ENCODE measurements at regions of chr10 and their contacts with region 1.

Region 1: GRCh38 chr10:4849555-4850242 is 23.7 kb downstream of the AKR1E2 start:
- DNase-seq: peak; percentile 93 to 96
- H3K4me3 ChIP-seq: no peak overlapping the region
- H3K4me3 Mint-ChIP-seq: peak overlapping the region; percentile 20
- H3K27ac Mint-ChIP-seq: peak overlapping the region; percentile 69
- H3K4me1 ChIP-seq: peaks cover 11% of the 10 kb centered on the region; the same call in 1 of the 2 replicates
- H3K4me1 Mint-ChIP-seq: peaks cover 20% of the 10 kb centered on the region
- H3K27me3 ChIP-seq: no peaks in the 10 kb centered on the region
- H3K27me3 Mint-ChIP-seq: no peaks in the 10 kb centered on the region
- CTCF ChIP-seq: peak; percentile 99 to 100

Region 2: DNA sequence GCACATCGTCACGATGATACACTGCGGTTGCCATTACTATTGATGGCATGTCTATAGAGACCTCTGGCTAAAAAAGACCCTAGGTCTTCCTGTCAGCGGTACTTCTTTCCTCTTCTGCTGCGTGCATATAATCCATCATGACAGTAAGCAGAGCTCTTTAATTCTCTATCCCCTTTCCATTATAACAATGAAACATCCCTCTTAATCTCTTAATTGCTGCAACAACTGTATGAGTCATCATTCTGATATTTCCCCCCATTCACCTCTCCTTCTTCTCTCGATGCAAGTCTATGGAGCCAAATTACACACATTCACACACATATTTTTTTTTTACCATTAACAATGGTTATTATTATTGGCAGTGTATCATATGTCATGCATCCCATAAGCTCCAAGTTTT is 68.9 kb before region 1 on chr10:
- CTCF ChIA-PET with region 1: no interaction called
- POLR2A ChIA-PET with region 1: no interaction called
- intact Hi-C with region 1: no loop called
- DNase-seq: no peak
- H3K4me3 ChIP-seq: no peak overlapping the region
- H3K4me3 Mint-ChIP-seq: no peak overlapping the region
- H3K27ac Mint-ChIP-seq: no peak overlapping the region
- H3K4me1 ChIP-seq: no peaks in the 10 kb centered on the region
- H3K4me1 Mint-ChIP-seq: no peaks in the 10 kb centered on the region
- H3K27me3 ChIP-seq: no peaks in the 10 kb centered on the region
- H3K27me3 Mint-ChIP-seq: peaks cover 14% of the 10 kb centered on the region
- CTCF ChIP-seq: no peak

Region 3: GRCh38 chr10:4819707-4820106 is 30.0 kb before region 1 on chr10:
- CTCF ChIA-PET with region 1: interaction called, 17 read pairs
- POLR2A ChIA-PET with region 1: no interaction called
- intact Hi-C with region 1: loop called (anchors 2 kb)
- DNase-seq: no peak
- H3K4me3 ChIP-seq: no peak overlapping the region
- H3K4me3 Mint-ChIP-seq: no peak overlapping the region
- H3K27ac Mint-ChIP-seq: no peak overlapping the region
- H3K4me1 ChIP-seq: peaks cover 9% of the 10 kb centered on the region; the same call in 1 of the 2 replicates
- H3K4me1 Mint-ChIP-seq: no peaks in the 10 kb centered on the region
- H3K27me3 ChIP-seq: no peaks in the 10 kb centered on the region
- H3K27me3 Mint-ChIP-seq: peaks cover 13% of the 10 kb centered on the region
- CTCF ChIP-seq: no peak

Region 4: DNA sequence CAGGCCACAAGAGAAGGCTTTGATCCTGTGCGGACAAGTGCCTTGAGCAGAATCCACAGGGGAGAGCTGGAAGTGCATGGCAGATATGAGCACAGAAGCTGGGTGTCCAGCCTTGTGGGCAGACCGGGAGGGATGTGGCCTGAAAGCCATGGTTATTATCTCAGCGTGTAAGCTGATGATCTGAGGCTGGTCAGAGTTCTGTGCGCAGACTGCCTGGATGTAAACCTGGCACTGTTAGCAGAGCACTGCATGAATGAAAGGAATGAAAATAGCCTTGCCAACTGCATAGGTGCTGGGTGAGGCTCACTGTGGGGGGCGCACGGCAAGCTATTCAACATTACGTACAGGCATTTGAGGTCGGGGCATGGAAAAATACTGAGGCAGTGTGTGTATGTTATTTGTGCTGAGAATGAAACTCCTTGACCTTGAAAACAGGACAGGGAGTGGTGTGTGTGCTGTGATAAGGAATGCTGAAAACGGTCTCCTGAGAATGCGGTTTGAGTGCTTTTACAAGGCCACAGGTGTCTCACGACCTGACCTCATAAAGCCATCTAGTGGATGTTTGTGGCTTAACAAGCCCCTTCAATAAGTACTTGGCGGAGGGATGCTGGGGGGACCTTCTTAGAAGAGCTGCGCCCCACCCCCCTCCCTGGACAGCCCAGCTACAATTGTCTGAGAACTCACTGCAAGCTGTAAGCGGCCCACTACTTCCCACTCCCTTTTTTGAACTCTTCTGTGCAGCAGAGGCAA is 132.2 kb after region 1 on chr10:
- CTCF ChIA-PET with region 1: interaction called, 78 read pairs
- POLR2A ChIA-PET with region 1: interaction called, 3 read pairs
- intact Hi-C with region 1: loop called (anchors 1 kb)
- DNase-seq: peak; percentile 81 to 91
- H3K4me3 ChIP-seq: no peak overlapping the region
- H3K4me3 Mint-ChIP-seq: peak overlapping the region; percentile 57
- H3K27ac Mint-ChIP-seq: peak overlapping the region; percentile 82
- H3K4me1 ChIP-seq: peaks cover 13% of the 10 kb centered on the region
- H3K4me1 Mint-ChIP-seq: peaks cover 19% of the 10 kb centered on the region
- H3K27me3 ChIP-seq: no peaks in the 10 kb centered on the region
- H3K27me3 Mint-ChIP-seq: no peaks in the 10 kb centered on the region
- CTCF ChIP-seq: peak; percentile 84 to 86

Region 5: DNA sequence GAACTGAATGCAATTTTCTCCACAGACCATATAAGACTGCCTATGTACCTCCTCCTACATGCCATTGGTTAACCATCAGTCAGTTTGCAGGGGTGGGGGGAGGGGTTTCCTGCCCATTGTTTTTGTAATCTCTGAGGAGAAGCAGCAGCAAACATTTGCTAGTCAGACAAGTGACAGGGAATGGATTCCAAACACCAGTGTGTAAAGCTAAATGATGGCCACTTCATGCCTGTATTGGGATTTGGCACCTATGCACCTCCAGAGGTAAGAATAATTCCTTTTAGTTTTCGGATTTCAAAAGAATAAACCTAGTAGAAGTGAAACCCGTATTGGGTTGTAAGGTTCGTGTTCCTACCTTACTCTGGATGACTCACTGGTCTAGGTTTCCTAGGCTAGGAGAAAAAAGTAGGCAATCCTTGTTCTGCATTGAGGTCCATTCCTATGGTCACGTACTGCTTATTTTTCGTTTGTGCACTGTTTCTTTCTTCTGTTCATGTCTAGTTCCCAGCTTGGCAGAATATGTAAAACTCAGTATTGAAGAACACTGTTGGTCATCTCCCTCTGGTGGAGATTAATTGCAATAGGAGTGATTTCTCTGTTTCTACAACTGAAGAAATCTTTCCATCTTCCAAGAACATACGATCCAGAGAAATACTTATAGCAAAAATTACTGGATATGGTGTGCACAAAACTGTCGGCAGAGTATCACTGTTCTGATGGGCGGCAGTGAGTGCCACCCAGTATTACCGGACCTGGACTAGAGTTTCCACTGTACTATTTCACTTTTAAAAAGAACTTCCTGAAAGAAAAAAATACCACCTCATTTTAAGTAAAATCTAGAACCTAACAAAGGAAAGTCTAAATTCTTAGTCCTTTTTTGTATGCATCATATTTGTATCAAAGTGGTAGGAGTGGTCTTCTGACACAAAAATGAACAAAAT is 244.8 kb after region 1 on chr10 and contains the start of gene AKR1C3:
- CTCF ChIA-PET with region 1: interaction called, 9 read pairs
- POLR2A ChIA-PET with region 1: no interaction called
- intact Hi-C with region 1: loop called (anchors 2 kb)
- DNase-seq: peak in 1 of 2 experiments; percentile 57
- H3K4me3 ChIP-seq: peak within 1 kb of the TSS; percentile 47
- H3K4me3 Mint-ChIP-seq: peak within 1 kb of the TSS; percentile 73
- H3K27ac Mint-ChIP-seq: peak within 1 kb of the TSS; percentile 67
- H3K4me1 ChIP-seq: peaks cover 9% of the 10 kb centered on the region
- H3K4me1 Mint-ChIP-seq: peaks cover 6% of the 10 kb centered on the region
- H3K27me3 ChIP-seq: no peaks in the 10 kb centered on the region
- H3K27me3 Mint-ChIP-seq: no peaks in the 10 kb centered on the region
- CTCF ChIP-seq: peak; percentile 70 to 80
- total RNA-seq, gene AKR1C3: 96.8 and 115 TPM in 2 replicates

Region 6: DNA sequence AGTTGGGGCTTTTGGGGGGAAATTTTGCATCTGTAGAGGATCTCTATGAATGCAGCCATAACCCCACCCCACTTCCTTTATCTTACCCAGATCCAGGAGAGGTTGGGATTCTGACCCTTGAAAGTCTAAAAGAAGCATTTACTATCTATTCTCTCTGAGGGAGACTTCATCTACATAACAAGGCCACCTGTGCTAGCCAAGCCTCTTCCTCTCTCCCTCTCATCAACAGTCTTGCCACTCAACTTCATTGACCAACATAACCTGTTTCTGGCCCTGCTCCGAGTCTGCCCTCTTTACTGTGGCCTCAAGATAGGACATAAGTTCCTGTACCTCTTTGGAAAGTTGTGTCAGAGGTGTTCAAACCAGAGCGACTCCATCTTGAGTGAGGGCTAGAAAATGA is 535.5 kb after region 1 on chr10:
- CTCF ChIA-PET with region 1: no interaction called
- POLR2A ChIA-PET with region 1: no interaction called
- intact Hi-C with region 1: loop called (anchors 2 kb)
- DNase-seq: no peak
- H3K4me3 ChIP-seq: no peak overlapping the region
- H3K4me3 Mint-ChIP-seq: no peak overlapping the region
- H3K27ac Mint-ChIP-seq: no peak overlapping the region
- H3K4me1 ChIP-seq: no peaks in the 10 kb centered on the region
- H3K4me1 Mint-ChIP-seq: no peaks in the 10 kb centered on the region
- H3K27me3 ChIP-seq: no peaks in the 10 kb centered on the region
- H3K27me3 Mint-ChIP-seq: no peaks in the 10 kb centered on the region
- CTCF ChIP-seq: no peak

Region 7: GRCh38 chr10:5596611-5597341 is 747.1 kb after region 1 on chr10:
- CTCF ChIA-PET with region 1: no interaction called
- POLR2A ChIA-PET with region 1: no interaction called
- intact Hi-C with region 1: no loop called
- DNase-seq: no peak
- H3K4me3 ChIP-seq: no peak overlapping the region
- H3K4me3 Mint-ChIP-seq: no peak overlapping the region
- H3K27ac Mint-ChIP-seq: no peak overlapping the region
- H3K4me1 ChIP-seq: peaks cover 12% of the 10 kb centered on the region
- H3K4me1 Mint-ChIP-seq: peaks cover 12% of the 10 kb centered on the region
- H3K27me3 ChIP-seq: no peaks in the 10 kb centered on the region
- H3K27me3 Mint-ChIP-seq: no peaks in the 10 kb centered on the region
- CTCF ChIP-seq: no peak